AG04449 (cell line): ENCODE measurements at regions of chr5 and their contacts with region 1.

Region 1: DNA sequence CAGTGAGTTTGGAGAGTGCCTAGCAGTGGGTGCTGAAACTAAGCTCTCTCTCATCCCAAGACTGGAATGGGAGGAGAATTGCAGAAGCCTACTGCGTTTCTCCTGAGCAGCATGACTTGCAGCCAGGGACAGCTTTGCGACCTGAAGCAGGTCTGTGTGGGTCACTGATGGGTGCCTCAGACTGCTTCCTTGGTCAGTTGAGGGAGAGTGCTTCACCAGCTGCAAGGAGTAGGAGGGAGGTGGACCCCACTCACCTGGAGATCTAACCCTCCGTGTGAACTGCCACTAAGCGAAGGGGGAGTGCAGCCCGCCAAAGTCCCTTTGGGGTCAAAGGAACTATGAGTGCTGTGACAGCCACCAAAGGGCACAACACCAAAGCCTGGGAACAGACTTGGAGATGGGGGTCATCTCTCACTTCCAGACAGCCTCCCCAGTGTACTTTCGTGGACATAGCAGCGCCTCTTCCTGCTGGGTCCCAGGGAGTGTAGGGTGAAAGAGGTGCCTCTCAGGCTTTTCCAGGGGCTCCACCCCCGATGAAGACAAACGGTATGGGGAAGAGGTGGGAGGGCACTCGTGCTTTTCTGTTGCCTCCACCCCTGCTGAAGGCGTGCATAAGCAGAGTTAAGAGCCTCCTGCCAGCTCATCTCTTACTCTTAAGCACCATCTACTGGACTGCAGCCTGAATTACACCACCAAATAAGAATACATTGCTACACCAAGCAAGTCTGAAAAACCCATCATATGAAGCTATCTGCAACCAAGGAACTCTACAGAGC is 34.3 kb upstream of the MACIR start:
- DNase-seq: no peak
- H3K4me3 ChIP-seq: no peak overlapping the region
- CTCF ChIP-seq: peak; percentile 44

Region 2: GRCh38 chr5:102845041-102845440 is 379.3 kb before region 1 on chr5:
- CTCF ChIA-PET with region 1: no interaction called
- POLR2A ChIA-PET with region 1: no interaction called
- DNase-seq: no peak
- H3K4me3 ChIP-seq: no peak overlapping the region
- CTCF ChIP-seq: no peak

Region 3: GRCh38 chr5:103243665-103244064 is 19.4 kb after region 1 on chr5:
- CTCF ChIA-PET with region 1: interaction called, 11 read pairs
- POLR2A ChIA-PET with region 1: no interaction called
- DNase-seq: no peak
- H3K4me3 ChIP-seq: no peak overlapping the region
- CTCF ChIP-seq: no peak

Region 4: DNA sequence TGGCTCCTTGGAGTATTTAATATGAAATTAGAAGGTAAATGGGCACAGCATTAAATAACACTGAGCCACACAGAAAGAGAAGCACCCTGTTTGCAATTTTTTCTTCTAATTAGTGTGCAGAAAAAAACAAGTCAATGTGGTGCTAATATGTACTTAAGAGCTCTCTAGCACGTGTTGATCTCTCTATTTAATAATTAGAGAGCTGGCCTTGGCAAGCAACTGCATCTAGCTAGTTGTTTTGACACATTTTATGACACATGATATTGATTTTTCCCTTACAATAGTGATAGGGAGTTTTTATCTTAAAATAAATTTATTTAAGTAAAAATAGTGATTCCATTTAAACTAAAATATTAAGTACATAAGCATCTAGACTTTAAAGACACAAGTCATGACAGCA is 392.8 kb after region 1 on chr5:
- CTCF ChIA-PET with region 1: no interaction called
- POLR2A ChIA-PET with region 1: no interaction called
- DNase-seq: no peak
- H3K4me3 ChIP-seq: no peak overlapping the region
- CTCF ChIP-seq: no peak